Ascending aorta (tissue), 2 donors: ENCODE measurements at regions of chr17 and their contacts with region 1.

Region 1: GRCh38 chr17:15502369-15503112 is 35.1 kb upstream of the CDRT4 start:
- DNase-seq: peak in 1 of 2 donors; percentile 95
- H3K4me3 ChIP-seq: peak overlapping the region; percentile 29 to 57
- H3K27ac ChIP-seq: peak overlapping the region; percentile 53 to 62
- H3K4me1 ChIP-seq: peaks cover 3 to 11% of the 10 kb centered on the region in 2 donors
- H3K27me3 ChIP-seq: no peaks in the 10 kb centered on the region
- CTCF ChIP-seq: peak; percentile 85 to 92 (median 89)

Region 2: GRCh38 chr17:15464231-15464985 is 38.1 kb before region 1 on chr17:
- intact Hi-C with region 1: loop called (anchors 2 kb)
- DNase-seq: no peak
- H3K4me3 ChIP-seq: no peak overlapping the region
- H3K27ac ChIP-seq: peak overlapping the region; percentile 51 to 66
- H3K4me1 ChIP-seq: peaks cover 4 to 21% of the 10 kb centered on the region in 2 donors
- H3K27me3 ChIP-seq: no peaks in the 10 kb centered on the region
- CTCF ChIP-seq: no peak